ENCODE measurements at regions of chr13 and their contacts with region 1.

Region 1: DNA sequence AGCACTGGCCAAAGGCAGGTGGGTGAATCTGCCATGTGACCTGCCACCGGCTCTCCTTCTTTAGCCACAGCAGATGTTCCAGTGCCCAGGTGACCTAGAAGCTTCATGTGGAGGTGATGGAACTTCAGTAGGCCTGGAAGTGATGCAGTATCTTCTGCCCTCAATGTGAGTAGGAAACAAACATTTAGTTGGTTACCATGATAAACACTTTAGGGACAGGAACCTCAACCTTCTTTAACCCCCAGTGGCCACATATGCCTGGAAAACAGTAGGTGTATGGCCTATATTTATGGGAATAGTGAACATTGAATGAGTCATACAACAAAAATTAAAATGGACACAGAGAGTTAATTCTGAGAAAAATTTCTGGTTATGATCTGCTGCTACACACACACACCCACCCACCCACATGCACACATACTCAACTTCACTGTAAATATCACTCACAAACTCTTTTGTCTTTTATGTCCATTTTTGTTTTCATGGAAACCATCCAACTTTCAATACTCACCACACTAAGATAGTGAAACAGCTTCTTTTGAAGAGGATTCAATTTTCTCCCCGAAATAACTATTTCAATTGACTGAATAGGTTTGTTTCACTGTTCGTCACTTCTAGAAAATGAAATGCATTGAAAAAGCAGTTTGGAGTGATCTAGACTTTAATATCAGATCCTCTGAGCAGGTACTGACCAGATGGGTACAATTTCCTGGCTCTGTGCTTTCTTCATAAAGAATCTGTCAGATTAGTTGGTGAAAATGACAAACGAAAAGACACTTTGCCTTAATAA is 97.3 kb downstream of the STARD13 start:
- DNase-seq: peak; percentile 59
- H3K4me3 Mint-ChIP-seq: peak overlapping the region; percentile 13
- H3K27ac Mint-ChIP-seq: peak overlapping the region; percentile 99
- H3K4me1 Mint-ChIP-seq: peaks cover 41% of the 10 kb centered on the region
- H3K27me3 Mint-ChIP-seq: no peaks in the 10 kb centered on the region

Region 2: GRCh38 chr13:32917504-32917903 is 270.8 kb before region 1 on chr13:
- intact Hi-C with region 1: loop called (anchors 5 kb)
- DNase-seq: no peak
- H3K4me3 Mint-ChIP-seq: no peak overlapping the region
- H3K27ac Mint-ChIP-seq: peak overlapping the region; percentile 57
- H3K4me1 Mint-ChIP-seq: peaks cover 10% of the 10 kb centered on the region
- H3K27me3 Mint-ChIP-seq: no peaks in the 10 kb centered on the region

Region 3: DNA sequence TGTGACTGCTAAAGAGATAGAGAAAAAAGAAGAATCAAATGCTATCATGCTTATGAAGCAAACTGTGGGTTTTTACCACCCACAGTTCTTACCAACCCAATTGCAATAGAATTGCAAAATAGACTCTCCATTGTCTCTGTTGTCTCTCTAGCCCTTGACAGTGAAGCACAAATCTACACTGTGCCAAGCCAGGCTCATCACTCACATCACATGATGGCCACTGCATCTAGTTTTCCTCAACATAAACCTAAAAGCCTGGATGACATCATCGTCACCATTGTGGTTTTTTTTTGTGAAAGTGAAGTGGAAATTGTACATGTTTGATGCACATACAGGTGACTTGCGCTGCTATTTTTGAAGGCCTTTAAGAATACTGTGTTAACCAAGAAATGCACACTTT is 116.0 kb before region 1 on chr13:
- intact Hi-C with region 1: loop called (anchors 5 kb)
- DNase-seq: peak; percentile 70
- H3K4me3 Mint-ChIP-seq: no peak overlapping the region
- H3K27ac Mint-ChIP-seq: no peak overlapping the region
- H3K4me1 Mint-ChIP-seq: peaks cover 22% of the 10 kb centered on the region
- H3K27me3 Mint-ChIP-seq: peaks cover 2% of the 10 kb centered on the region

Region 4: DNA sequence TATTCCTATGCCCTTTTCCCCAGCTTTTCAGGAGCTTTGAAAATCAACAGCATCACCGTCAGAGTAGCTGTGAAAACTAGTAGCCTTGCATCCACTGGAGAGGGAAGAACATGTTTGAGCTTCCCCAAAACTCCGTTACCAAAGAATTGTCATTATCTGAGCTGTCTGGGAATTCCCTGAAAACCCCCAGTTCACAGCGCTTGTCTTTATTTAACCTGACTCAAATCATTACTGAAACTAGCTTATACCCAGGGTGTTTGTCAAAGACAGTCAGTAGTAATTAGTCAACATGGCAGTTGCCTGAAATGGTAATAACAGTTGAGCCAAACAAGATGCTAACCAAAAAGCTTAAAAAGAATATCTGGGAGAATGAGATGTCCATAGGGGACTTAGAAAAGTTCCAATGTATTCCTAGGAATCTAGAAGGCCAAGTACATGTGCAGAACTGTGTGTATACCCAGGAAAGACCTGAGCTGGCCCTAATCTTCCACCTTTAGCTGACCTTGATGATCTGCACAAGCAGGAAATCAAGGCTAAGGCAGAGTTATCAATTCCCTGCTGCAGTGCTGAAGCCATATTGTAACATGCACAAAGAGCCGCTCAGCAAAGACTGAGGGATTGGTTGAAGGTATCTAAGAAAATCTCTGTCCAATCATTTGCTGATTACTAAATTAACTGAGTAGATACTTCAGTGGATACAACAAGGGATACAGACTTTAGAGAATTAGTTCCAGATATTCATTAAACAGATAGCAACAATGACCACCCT is 41.3 kb before region 1 on chr13:
- intact Hi-C with region 1: loop called (anchors 1 kb)
- DNase-seq: peak; percentile 75
- H3K4me3 Mint-ChIP-seq: peak overlapping the region; percentile 35
- H3K27ac Mint-ChIP-seq: peak overlapping the region; percentile 90
- H3K4me1 Mint-ChIP-seq: peaks cover 28% of the 10 kb centered on the region
- H3K27me3 Mint-ChIP-seq: no peaks in the 10 kb centered on the region

Region 5: GRCh38 chr13:33169273-33169980 is 18.9 kb before region 1 on chr13:
- intact Hi-C with region 1: no loop called
- DNase-seq: no peak
- H3K4me3 Mint-ChIP-seq: no peak overlapping the region
- H3K27ac Mint-ChIP-seq: no peak overlapping the region
- H3K4me1 Mint-ChIP-seq: peaks cover 2% of the 10 kb centered on the region
- H3K27me3 Mint-ChIP-seq: no peaks in the 10 kb centered on the region

Region 6: DNA sequence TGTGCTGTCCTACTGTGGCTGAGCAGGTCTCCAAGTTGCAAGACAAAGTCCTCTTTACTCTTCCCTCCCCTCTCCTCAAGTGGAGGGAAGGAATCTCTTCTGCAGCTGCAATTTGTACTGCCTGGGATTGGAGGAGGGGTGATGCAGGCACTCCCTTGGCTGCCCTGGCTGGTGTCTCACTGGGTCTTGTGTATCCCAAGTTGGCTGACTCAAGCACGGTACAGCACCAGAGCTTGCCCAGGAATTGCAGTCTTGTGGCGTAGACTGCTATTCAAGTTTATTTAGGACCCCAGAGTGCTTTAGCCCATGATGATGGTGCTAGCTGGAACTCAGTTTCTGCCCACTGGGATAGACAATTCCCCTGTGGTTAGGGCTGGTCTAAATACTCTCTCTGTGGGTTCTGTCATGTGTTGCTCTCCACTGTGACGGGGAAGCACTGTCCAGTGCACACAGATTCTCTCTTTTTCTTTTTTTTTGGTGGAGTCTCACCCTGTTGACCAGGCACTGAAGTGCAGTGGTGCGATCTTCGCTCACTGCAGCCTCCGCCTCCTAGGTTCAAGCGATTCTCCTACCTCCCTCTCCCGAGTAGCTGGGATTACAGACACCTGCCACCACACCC is 658.3 kb after region 1 on chr13:
- intact Hi-C with region 1: no loop called
- DNase-seq: no peak
- H3K4me3 Mint-ChIP-seq: no peak overlapping the region
- H3K27ac Mint-ChIP-seq: peak overlapping the region; percentile 13
- H3K4me1 Mint-ChIP-seq: no peaks in the 10 kb centered on the region
- H3K27me3 Mint-ChIP-seq: no peaks in the 10 kb centered on the region

Measured in activated CD4-positive, alpha-beta T cell treated with anti-CD3 and anti-CD28 coated beads, Interleukin-2, amount 10 ng/mL, durations not matched to agents 24 days and 14 days (primary cell).